ENCODE measurements at regions of chr7 and their contacts with region 1.

Region 1: DNA sequence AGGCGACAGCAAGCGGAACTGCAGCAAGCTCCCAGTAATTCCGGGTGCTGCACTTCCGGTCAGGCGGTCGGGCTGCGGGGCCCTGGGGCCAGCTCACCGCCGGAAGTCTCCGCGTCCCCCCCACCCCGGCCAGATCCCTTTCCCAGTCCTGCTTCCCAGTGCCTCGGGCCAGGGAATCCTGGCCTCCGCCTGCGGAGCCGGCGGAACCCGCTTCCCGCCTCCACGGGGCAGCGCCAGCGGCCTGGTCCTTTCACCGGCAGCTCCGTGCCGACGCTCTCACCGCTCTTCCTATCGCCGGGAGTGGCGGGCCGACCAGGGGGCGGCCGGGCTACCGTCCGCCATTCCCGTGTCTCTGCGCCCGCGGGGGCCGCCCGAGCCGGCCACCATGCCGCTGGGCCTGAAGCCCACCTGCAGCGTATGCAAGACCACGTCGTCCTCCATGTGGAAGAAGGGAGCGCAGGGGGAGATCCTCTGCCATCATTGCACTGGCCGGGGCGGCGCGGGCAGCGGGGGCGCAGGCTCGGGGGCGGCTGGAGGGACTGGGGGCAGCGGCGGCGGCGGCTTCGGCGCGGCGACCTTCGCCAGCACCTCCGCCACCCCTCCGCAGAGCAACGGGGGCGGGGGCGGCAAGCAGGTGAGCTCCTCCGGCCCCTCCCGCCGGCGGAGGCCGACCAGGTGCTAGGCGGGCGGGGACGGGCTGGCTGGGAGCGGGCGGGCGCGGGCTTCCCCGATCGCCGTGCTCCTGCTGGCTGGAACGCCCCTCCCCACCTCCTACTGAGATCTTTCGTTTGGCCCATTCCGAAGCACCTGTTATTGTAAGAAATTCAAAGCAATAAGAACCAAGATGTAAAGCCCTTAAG is at the start of gene GATAD1:
- DNase-seq: peak; percentile 74
- ATAC-seq: peak; percentile 85
- H3K4me3 Mint-ChIP-seq: peak within 1 kb of the TSS; percentile 95
- H3K27ac Mint-ChIP-seq: peak within 1 kb of the TSS; percentile 97
- H3K4me1 Mint-ChIP-seq: peaks cover 8% of the 10 kb centered on the region
- H3K27me3 Mint-ChIP-seq: no peaks in the 10 kb centered on the region
- CTCF ChIP-seq: peak; percentile 61
- total RNA-seq, gene GATAD1: 30.6 and 36.2 TPM in 2 replicates

Region 2: DNA sequence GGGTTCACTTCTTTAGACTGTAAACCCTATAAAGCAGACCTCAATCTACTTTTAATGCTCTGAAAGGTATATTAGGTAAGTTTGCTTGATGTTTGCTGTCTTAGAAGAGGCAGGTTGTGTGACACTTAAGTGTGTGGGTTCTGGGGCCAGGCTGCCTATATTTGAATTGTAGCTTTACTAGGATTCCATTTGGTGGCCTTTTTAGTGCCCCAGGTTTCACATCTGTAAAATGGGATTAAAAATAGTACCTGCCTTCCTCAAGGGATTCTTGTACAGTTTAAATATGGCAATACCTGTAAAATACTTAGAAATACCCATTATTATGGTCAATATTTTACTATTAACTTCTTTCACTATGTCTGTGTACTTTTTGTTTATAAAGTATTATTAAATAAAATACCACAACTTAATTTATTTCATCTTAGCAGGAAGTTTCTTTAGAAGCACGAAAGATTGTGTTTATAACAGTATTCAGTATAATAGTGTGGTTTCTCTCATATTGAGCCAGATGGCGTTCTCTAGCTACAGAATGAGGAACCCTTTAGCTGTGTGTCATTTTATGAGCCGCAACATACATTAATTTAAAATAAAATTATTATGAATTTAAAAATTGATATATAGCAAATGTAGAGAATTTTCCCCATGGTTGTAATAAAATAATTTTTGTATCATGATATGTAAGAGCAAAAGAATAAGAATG is 1757.3 kb before region 1 on chr7:
- CTCF ChIA-PET with region 1: no interaction called
- POLR2A ChIA-PET with region 1: no interaction called
- intact Hi-C with region 1: loop called (anchors 5 kb)
- DNase-seq: no peak
- ATAC-seq: peak; percentile 65
- H3K4me3 Mint-ChIP-seq: no peak overlapping the region
- H3K27ac Mint-ChIP-seq: no peak overlapping the region
- H3K4me1 Mint-ChIP-seq: peaks cover 44% of the 10 kb centered on the region
- H3K27me3 Mint-ChIP-seq: no peaks in the 10 kb centered on the region
- CTCF ChIP-seq: no peak

Region 3: DNA sequence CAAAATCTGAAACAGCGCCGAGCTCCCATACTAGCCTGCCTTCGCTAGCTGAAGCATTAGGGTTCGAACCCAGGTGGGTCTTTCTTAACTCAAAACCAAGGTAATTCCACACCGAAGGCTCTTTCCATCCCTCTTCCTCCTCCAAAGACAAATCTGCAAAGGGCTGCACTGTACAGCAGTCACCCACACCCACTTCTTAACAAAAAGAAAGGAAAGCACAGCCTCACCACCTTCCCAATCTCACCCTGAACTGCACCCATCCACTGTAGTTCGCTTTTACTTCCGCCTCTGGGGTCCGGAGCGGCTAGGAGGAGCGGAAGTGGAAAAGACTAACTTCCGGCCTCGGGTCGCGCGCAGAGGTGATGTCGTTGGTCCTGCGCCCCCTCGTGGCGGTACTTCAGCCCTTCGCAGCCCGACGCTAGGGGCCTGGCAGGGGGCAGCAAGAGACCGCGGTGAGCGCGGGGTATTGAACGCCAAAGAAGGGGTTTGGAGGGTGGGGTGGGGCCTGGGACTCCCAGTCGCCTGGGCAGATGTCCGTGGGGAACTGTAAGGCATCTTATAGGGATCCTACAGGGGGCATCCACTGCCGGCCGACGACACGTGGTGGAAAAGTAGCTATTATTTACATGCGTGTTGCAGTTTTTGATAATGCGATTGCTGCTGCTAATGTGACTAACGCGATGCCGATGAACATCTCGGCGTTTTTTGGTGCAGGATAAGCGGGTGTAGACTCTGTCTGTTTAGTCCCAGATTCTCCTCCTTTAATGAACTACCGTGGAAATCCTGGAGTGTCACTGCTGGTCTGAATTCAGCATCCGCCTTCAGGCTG is 566.9 kb before region 1 on chr7 and contains the start of gene MTERF1:
- CTCF ChIA-PET with region 1: interaction called, 4 read pairs
- POLR2A ChIA-PET with region 1: interaction called, 5 read pairs
- intact Hi-C with region 1: loop called (anchors 1 kb)
- DNase-seq: peak; percentile 92
- ATAC-seq: peak; percentile 98
- H3K4me3 Mint-ChIP-seq: peak within 1 kb of the TSS; percentile 100
- H3K27ac Mint-ChIP-seq: peak within 1 kb of the TSS; percentile 92
- H3K4me1 Mint-ChIP-seq: peaks cover 30% of the 10 kb centered on the region
- H3K27me3 Mint-ChIP-seq: no peaks in the 10 kb centered on the region
- CTCF ChIP-seq: peak; percentile 27
- total RNA-seq, gene MTERF1: 26.2 and 30.3 TPM in 2 replicates

Region 4: GRCh38 chr7:92025260-92025659 is 422.3 kb before region 1 on chr7:
- CTCF ChIA-PET with region 1: no interaction called
- POLR2A ChIA-PET with region 1: no interaction called
- intact Hi-C with region 1: no loop called
- DNase-seq: no peak
- ATAC-seq: no peak
- H3K4me3 Mint-ChIP-seq: no peak overlapping the region
- H3K27ac Mint-ChIP-seq: no peak overlapping the region
- H3K4me1 Mint-ChIP-seq: no peaks in the 10 kb centered on the region
- H3K27me3 Mint-ChIP-seq: no peaks in the 10 kb centered on the region
- CTCF ChIP-seq: no peak

Region 5: GRCh38 chr7:92134271-92135051 is 313.1 kb before region 1 on chr7 and contains the start of gene CYP51A1:
- CTCF ChIA-PET with region 1: no interaction called
- POLR2A ChIA-PET with region 1: interaction called, 17 read pairs
- intact Hi-C with region 1: loop called (anchors 1 kb)
- DNase-seq: peak; percentile 97
- ATAC-seq: peak; percentile 83
- H3K4me3 Mint-ChIP-seq: peak within 1 kb of the TSS; percentile 99
- H3K27ac Mint-ChIP-seq: peak within 1 kb of the TSS; percentile 100
- H3K4me1 Mint-ChIP-seq: peaks cover 47% of the 10 kb centered on the region
- H3K27me3 Mint-ChIP-seq: no peaks in the 10 kb centered on the region
- CTCF ChIP-seq: no peak
- total RNA-seq, gene CYP51A1: 90.9 and 92.8 TPM in 2 replicates

Region 6: GRCh38 chr7:92425321-92425947 is 22.1 kb before region 1 on chr7:
- CTCF ChIA-PET with region 1: interaction called, 57 read pairs
- POLR2A ChIA-PET with region 1: interaction called, 33 read pairs
- intact Hi-C with region 1: loop called (anchors 1 kb)
- DNase-seq: no peak
- ATAC-seq: no peak
- H3K4me3 Mint-ChIP-seq: no peak overlapping the region
- H3K27ac Mint-ChIP-seq: no peak overlapping the region
- H3K4me1 Mint-ChIP-seq: peaks cover 6% of the 10 kb centered on the region
- H3K27me3 Mint-ChIP-seq: peaks cover 11% of the 10 kb centered on the region
- CTCF ChIP-seq: no peak

Region 7: GRCh38 chr7:92588561-92588960 is 141.0 kb after region 1 on chr7:
- CTCF ChIA-PET with region 1: no interaction called
- POLR2A ChIA-PET with region 1: interaction called, 4 read pairs
- intact Hi-C with region 1: loop called (anchors 1 kb)
- DNase-seq: no peak
- ATAC-seq: no peak
- H3K4me3 Mint-ChIP-seq: peak overlapping the region; percentile 80
- H3K27ac Mint-ChIP-seq: peak overlapping the region; percentile 80
- H3K4me1 Mint-ChIP-seq: peaks cover 59% of the 10 kb centered on the region
- H3K27me3 Mint-ChIP-seq: no peaks in the 10 kb centered on the region
- CTCF ChIP-seq: no peak

Region 8: GRCh38 chr7:94436018-94436604 is 1988.5 kb after region 1 on chr7:
- CTCF ChIA-PET with region 1: no interaction called
- POLR2A ChIA-PET with region 1: no interaction called
- intact Hi-C with region 1: no loop called
- DNase-seq: no peak
- ATAC-seq: peak; percentile 71
- H3K4me3 Mint-ChIP-seq: no peak overlapping the region
- H3K27ac Mint-ChIP-seq: no peak overlapping the region
- H3K4me1 Mint-ChIP-seq: no peaks in the 10 kb centered on the region
- H3K27me3 Mint-ChIP-seq: peaks cover 13% of the 10 kb centered on the region
- CTCF ChIP-seq: peak; percentile 81